ENCODE measurements at regions of chr3 and their contacts with region 1.

Region 1: DNA sequence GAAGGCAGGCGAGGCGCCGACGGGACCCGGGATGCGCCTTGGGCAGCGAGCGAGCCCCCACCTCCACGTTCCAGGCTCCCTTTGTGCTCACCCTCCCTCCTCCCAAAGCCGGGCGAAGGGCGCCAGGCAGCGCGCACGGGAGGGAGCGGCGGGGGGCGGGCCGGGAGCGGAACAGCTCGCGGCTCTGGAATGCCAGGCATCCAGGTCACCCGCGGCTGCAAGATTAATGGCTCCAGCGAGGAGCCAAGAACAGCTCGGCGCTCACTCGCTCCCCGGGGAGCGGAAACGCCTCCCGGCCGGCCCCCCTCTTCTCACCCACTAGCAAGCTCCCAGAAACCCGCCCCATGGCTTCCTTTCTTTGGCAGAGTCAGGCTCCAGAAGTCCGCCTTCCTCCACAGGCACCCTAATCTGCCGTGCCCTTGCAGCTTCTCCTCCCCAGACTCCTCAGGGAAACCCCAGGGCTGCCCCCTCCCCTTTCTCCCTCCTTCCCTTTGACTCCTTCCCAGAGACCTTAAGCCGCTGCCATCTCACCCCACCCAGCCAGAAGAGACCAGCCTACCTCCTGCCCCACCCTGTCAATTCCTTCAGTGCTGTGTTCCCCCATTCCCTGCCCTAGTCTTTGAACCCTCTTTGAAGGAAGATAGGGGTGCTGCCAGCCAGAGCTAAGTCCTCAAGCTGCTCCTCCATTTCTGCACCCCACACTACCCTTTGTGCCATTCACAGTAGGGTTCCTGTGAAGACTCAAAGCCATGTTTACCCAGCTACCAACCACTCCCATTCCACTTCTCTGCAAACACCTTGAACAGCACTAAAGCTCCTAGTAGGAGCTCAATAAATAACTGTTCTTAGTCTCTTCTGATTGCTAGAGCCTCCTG is 9.9 kb downstream of the AMOTL2 start:
- DNase-seq: peak; percentile 93
- H3K4me3 ChIP-seq: peak overlapping the region; percentile 38
- H3K27ac ChIP-seq: peak overlapping the region; percentile 96
- H3K27me3 ChIP-seq: no peaks in the 10 kb centered on the region
- CTCF ChIP-seq: no peak

Region 2: GRCh38 chr3:133540896-133541674 is 823.2 kb before region 1 on chr3:
- CTCF ChIA-PET with region 1: no interaction called
- POLR2A ChIA-PET with region 1: no interaction called
- DNase-seq: no peak
- H3K4me3 ChIP-seq: no peak overlapping the region
- H3K27ac ChIP-seq: no peak overlapping the region
- H3K27me3 ChIP-seq: no peaks in the 10 kb centered on the region
- CTCF ChIP-seq: no peak

Region 3: DNA sequence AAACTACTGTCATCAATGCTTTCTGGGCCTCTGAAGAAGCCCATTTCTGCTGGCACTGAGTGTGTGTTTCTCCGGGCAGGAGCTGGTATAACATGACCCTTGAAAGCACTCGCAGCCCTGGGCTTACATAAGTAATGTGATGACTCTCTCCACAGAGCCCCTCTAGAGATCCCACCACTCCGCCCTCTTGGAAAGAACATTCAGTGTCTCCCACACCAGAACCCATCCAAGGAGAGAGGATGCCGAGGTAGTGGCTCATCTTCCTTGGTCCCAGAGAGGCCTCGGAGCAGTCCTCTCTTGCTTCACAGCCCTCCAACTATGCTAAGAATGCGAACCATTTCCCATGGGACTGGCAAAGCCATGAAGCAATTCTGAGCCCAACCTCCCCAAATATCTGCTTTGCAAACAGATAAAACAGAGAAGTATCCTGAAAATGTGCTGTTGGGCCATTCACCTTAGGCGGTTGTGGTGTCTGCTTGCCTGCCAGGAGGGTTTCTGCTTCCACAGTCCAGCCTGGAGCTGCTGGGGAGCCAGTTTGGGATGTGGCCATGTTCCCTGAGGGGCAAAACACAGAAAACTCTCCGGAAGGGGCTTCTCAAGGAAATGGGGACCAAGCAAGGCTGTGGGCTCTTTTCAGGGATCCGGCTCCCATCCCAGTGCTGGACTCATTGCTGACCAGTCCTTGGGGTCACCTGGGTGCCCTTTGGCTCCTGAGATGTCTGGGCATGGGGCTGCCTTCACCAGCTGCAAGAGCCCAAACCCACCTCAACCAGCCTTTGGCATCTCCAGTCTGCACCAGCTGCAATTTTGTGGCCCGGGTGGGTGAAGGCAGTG is 37.3 kb before region 1 on chr3:
- CTCF ChIA-PET with region 1: interaction called, 3 read pairs
- POLR2A ChIA-PET with region 1: interaction called, 20 read pairs
- DNase-seq: peak; percentile 94
- H3K4me3 ChIP-seq: no peak overlapping the region
- H3K27ac ChIP-seq: peak overlapping the region; percentile 99
- H3K27me3 ChIP-seq: no peaks in the 10 kb centered on the region
- CTCF ChIP-seq: no peak

Region 4: GRCh38 chr3:134381076-134381475 is 16.8 kb after region 1 on chr3:
- CTCF ChIA-PET with region 1: no interaction called
- POLR2A ChIA-PET with region 1: no interaction called
- DNase-seq: no peak
- H3K4me3 ChIP-seq: no peak overlapping the region
- H3K27ac ChIP-seq: no peak overlapping the region
- H3K27me3 ChIP-seq: no peaks in the 10 kb centered on the region
- CTCF ChIP-seq: no peak

Region 5: GRCh38 chr3:134427400-134428145 is 63.3 kb after region 1 on chr3:
- CTCF ChIA-PET with region 1: no interaction called
- POLR2A ChIA-PET with region 1: interaction called, 25 read pairs
- DNase-seq: peak; percentile 99
- H3K4me3 ChIP-seq: no peak overlapping the region; the same call in 1 of the 2 replicates
- H3K27ac ChIP-seq: peak overlapping the region; percentile 98
- H3K27me3 ChIP-seq: no peaks in the 10 kb centered on the region
- CTCF ChIP-seq: 0 out of 2 replicates have a peak, but pooled peaks have one; percentile 5

Region 6: DNA sequence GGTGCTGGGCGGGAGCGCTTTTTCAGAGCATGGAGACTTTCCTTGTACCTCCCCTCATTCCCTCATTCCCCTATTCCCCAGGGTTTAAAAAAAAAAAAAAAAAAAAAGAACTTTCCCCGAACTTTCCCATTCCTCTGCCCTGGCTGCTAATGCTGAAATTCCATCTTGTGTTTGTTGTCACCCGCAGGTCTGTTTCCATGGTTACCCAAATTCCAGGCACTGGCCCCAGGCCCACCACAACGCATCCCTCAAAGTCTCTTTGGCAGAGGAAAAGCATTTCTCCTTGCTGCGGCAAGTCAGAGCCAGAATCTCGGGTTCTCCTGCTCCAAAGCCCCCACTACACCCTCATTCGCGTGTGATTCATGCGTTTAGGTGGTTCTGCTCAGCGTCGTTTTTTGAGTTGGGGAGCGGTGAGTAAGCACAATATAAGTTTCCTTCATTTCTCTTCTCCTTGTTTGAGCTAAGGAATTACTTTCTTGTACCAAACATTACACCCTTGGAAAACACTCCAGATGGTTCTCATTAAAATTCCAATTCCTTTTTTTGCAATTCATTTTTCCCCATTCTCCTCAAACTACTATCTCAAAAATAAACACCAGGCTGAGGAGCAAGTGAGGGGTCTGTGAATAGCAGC is 99.9 kb after region 1 on chr3:
- CTCF ChIA-PET with region 1: no interaction called
- POLR2A ChIA-PET with region 1: interaction called, 13 read pairs
- DNase-seq: peak; percentile 96
- H3K4me3 ChIP-seq: peak overlapping the region; percentile 30
- H3K27ac ChIP-seq: peak overlapping the region; percentile 96
- H3K27me3 ChIP-seq: no peaks in the 10 kb centered on the region
- CTCF ChIP-seq: no peak

Region 7: DNA sequence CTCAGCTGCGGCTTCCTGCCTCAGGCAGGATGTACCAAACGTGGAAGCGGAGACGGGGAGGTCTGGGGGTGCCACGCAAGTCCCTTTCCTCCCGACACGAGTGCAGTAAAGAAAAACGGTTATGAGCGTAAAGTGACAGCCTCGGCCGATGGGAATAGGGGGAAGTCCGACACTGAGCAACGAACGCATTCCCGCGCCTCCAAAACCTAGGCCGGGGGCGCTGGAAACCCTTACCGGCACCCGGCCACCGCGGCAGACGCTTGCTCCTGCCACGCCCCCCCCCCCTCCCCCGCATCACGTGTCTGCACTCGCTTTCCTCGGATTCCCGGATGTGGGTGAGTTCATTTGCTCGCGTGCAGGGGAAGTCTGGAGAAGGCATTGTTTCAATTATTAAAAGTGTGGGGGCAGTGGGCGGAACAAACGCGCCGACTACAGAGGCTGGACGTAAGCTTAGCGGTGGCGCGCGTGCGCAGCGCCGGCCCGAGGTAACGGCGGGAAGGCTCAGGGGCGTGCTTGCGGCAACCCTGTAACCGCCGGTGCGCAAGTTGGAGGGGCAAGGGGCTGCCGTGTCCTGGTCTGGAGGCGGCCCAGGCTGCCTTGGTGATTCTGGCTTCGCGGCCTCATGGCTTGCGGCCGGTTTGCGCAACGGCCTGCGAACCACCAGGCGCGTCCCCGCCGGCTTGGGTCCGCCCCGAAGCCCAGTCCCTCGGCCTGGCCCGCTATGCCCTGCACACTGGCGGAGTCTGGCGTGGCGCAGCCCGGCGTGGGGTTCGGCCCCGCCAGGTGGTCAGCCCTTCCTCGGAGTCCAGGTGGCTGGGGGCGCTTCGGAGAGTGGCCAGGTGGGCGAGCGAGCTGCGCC is 121.6 kb after region 1 on chr3 and contains the starts of genes ANAPC13 and CEP63:
- CTCF ChIA-PET with region 1: interaction called, 4 read pairs
- POLR2A ChIA-PET with region 1: interaction called, 17 read pairs
- DNase-seq: peak; percentile 98
- H3K4me3 ChIP-seq: peak within 1 kb of the TSS; percentile 87
- H3K27ac ChIP-seq: peak within 1 kb of the TSS; percentile 97
- H3K27me3 ChIP-seq: no peaks in the 10 kb centered on the region
- CTCF ChIP-seq: no peak
- polyA plus RNA-seq, gene ANAPC13: 122 and 176 TPM in 2 replicates
- polyA plus RNA-seq, gene CEP63: 11.0 and 16.3 TPM in 2 replicates

Region 8: DNA sequence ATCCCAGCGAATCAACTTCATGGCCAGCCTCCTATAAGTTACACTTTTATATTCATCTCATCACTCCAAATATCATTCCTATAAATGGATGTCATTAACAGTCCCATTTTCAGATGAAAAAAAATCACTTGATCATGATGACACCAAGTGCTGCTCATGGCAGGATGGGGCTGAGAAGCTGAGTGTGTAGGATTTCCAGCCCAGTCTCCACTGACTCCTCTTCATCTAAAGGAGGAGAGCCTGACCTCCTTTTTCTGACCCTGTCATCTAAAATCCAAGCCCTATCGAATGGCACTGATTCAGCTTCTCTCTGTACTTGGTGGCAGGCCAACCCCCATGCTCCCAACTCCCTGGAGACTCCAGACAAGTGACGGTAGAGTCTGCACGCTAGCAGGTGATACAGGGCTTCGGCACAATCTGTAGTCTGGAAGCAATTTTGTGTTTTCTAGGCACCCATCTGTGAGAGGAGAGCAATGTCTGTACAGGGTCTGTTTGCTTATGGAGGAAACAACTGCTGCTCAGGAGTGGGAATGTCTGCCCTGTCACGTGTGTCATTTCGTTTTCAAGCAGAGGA is 534.0 kb after region 1 on chr3:
- CTCF ChIA-PET with region 1: no interaction called
- POLR2A ChIA-PET with region 1: no interaction called
- DNase-seq: no peak
- H3K4me3 ChIP-seq: no peak overlapping the region
- H3K27ac ChIP-seq: no peak overlapping the region
- H3K27me3 ChIP-seq: no peaks in the 10 kb centered on the region
- CTCF ChIP-seq: no peak